ENCODE measurements at regions of chr2 and their contacts with region 1.

Region 1: DNA sequence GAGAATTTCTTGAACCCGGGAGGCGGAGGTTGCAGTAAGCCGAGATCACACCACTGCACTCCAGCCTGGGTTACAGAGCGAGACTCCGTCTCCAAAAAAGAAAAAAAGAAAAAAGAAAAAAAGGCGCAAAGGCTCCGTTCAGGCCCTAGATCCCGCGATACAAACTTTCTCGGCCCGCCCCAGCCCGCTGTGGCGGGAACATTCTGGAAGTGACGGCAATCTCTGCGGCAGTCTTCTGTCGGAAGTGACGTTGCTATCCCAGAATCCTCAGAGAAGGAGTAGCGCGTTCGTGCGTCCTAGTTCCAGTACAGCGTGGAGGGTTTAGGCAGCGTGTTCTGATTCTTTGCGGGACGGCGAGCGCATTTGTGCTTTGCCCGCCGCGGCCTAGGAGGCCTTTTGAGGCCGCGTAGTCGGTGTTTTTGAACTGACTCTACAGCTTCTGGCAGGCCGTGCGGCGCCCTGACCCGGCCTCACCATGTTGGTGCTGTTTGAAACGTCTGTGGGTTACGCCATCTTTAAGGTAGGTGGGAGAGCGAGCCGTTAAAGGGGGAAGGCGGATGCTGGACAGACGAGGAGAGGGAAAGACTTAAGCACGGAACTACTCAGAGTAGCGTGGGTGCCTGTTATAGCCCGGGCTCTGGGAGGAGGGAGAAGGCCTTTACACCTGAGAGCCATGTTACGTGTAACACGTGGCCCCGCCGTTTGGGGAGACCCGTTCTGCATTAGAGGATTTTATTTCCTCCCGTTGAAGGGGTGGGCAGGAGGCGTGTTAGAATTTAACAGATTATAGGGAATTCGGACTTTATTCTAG is at the start of gene NOP58:
- DNase-seq: peak; percentile 95
- H3K4me3 ChIP-seq: peak within 1 kb of the TSS; percentile 43 to 96 (median 56)
- H3K27ac ChIP-seq: peak within 1 kb of the TSS; percentile 75
- H3K4me1 ChIP-seq: peaks cover 13% of the 10 kb centered on the region
- H3K27me3 ChIP-seq: no peaks in the 10 kb centered on the region
- CTCF ChIP-seq: no peak
- POLR2A ChIP-seq: peak; percentile 98
- total RNA-seq, gene NOP58: 70.6 and 71.4 TPM in 2 replicates

Region 2: GRCh38 chr2:202221873-202222272 is 43.8 kb before region 1 on chr2:
- CTCF ChIA-PET with region 1: interaction called, 3 read pairs
- POLR2A ChIA-PET with region 1: no interaction called
- dilution Hi-C with region 1: no loop called
- intact Hi-C with region 1: loop called (anchors 5 kb)
- DNase-seq: no peak
- H3K4me3 ChIP-seq: no peak overlapping the region
- H3K27ac ChIP-seq: no peak overlapping the region
- H3K4me1 ChIP-seq: no peaks in the 10 kb centered on the region
- H3K27me3 ChIP-seq: no peaks in the 10 kb centered on the region
- CTCF ChIP-seq: no peak
- POLR2A ChIP-seq: no peak

Region 3: GRCh38 chr2:202238234-202239197 is 27.2 kb before region 1 on chr2 and contains the start of gene SUMO1:
- CTCF ChIA-PET with region 1: no interaction called
- POLR2A ChIA-PET with region 1: no interaction called
- dilution Hi-C with region 1: no loop called
- intact Hi-C with region 1: loop called (anchors 1 kb)
- DNase-seq: peak; percentile 91
- H3K4me3 ChIP-seq: peak within 1 kb of the TSS; percentile 78 to 86 (median 82)
- H3K27ac ChIP-seq: peak within 1 kb of the TSS; percentile 65
- H3K4me1 ChIP-seq: peaks cover 15% of the 10 kb centered on the region
- H3K27me3 ChIP-seq: no peaks in the 10 kb centered on the region
- CTCF ChIP-seq: no peak
- POLR2A ChIP-seq: peak; percentile 73
- total RNA-seq, gene SUMO1: 102 and 105 TPM in 2 replicates

Region 4: DNA sequence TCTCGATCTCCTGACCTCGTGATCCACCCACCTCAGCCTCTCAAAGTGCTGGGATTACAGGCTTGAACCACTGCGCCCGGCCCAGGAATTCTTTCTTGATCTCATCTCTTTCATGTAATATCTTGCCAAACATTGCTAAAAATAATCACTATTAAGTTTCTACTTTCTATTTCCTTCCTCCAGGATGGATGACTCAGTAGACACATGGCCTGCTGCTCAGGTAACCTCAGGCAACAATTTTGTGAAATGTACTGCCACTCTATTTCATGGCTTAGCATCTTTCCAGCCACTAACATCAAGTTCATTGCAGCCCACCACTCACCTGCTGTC is 16.2 kb before region 1 on chr2:
- CTCF ChIA-PET with region 1: interaction called, 4 read pairs
- POLR2A ChIA-PET with region 1: no interaction called
- dilution Hi-C with region 1: no loop called
- intact Hi-C with region 1: loop called (anchors 1 kb)
- DNase-seq: peak; percentile 46
- H3K4me3 ChIP-seq: no peak overlapping the region
- H3K27ac ChIP-seq: peak overlapping the region; percentile 8
- H3K4me1 ChIP-seq: peaks cover 17% of the 10 kb centered on the region
- H3K27me3 ChIP-seq: no peaks in the 10 kb centered on the region
- CTCF ChIP-seq: no peak
- POLR2A ChIP-seq: no peak

Region 5: DNA sequence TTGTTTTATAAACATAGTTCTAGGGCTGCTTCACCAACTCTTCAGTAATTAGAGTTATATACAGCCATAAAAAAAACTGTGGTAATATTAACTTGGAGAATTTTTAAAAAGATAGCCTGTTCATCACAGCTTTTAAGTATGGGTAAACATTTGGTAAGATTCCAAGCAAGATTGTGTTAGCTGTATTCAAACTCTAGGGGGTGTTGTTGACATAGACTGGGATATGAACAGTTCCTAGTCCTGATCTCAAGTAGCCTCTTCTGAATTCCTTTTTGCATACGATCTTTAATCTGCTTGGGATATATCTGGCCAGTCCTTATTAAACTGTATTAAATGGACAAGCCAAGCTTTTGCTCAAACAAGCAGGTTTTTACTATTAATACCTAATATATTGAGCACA is 13.3 kb after region 1 on chr2:
- CTCF ChIA-PET with region 1: interaction called, 12 read pairs
- POLR2A ChIA-PET with region 1: no interaction called
- dilution Hi-C with region 1: no loop called
- intact Hi-C with region 1: loop called (anchors 1 kb)
- DNase-seq: peak; percentile 88
- H3K4me3 ChIP-seq: peak overlapping the region in 1 of 3 experiments; percentile 12
- H3K27ac ChIP-seq: peak overlapping the region; percentile 88
- H3K4me1 ChIP-seq: peaks cover 24% of the 10 kb centered on the region
- H3K27me3 ChIP-seq: no peaks in the 10 kb centered on the region
- CTCF ChIP-seq: peak; percentile 41 to 61
- POLR2A ChIP-seq: no peak